K562 (cell line): ENCODE measurements at regions of chr17 and their contacts with region 1.

Region 1: DNA sequence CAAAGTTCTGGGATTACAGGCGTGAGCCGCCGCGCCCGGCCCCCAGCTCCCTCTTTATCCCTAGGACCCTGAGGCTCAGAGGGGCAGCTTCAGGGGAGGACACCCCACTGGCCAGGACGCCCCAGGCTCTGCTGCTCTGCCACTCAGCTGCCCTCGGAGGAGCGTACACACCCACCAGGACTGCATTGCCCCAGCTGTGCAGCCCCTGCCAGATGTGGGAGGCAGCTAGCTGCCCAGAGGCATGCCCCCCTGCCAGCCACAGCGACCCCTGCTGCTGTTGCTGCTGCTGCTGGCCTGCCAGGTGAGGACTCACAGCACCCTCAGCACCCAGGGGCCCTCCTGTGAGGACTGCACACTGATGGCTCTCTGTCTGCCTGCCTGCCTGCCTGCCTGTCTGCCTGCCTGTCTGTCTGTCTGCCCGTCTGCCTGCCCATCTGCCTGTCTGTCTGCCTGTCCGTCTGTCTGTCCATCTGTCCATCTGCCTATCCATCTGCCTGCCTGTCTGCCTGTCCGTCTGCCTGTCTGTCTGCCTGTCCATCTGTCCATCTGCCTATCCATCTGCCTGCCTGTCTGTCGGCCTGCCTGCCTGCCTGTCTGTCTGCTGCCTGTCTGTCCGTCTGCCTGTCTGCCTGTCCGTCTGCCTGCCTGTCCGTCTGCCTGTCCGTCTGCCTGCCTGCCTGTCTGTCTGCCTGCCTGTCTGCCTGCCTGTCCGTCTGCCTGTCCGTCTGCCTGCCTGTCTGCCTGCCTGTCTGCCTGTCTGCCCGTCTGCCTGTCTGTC is 5.0 kb downstream of the GCGR start:
- DNase-seq: no peak
- ATAC-seq: peak; percentile 36
- H3K4me3 ChIP-seq: no peak overlapping the region
- H3K27ac ChIP-seq: no peak overlapping the region
- H3K4me1 ChIP-seq: peaks cover 0 to 91% of the 10 kb centered on the region in 2 experiments; a peak in 3 of 5 replicates
- H3K27me3 ChIP-seq: peaks cover 20 to 76% of the 10 kb centered on the region in 2 experiments; a peak in 4 of 5 replicates
- CTCF ChIP-seq: peak; percentile 20 to 30 (median 23); a peak in 2 of 6 replicates
- EP300 ChIP-seq: no peak
- POLR2A ChIP-seq: no peak
- RAD21 ChIP-seq: no peak

Region 2: GRCh38 chr17:81733507-81734404 is 75.2 kb before region 1 on chr17:
- CTCF ChIA-PET with region 1: no interaction called
- POLR2A ChIA-PET with region 1: no interaction called
- in situ Hi-C with region 1: loop called (anchors 5 kb)
- intact Hi-C with region 1: no loop called
- DNase-seq: peak; percentile 81 to 92 (median 90)
- ATAC-seq: peak; percentile 96
- H3K4me3 ChIP-seq: no peak overlapping the region
- H3K27ac ChIP-seq: no peak overlapping the region
- H3K4me1 ChIP-seq: peaks cover 10 to 62% of the 10 kb centered on the region in 2 experiments; a peak in 4 of 5 replicates
- H3K27me3 ChIP-seq: no peaks in the 10 kb centered on the region
- CTCF ChIP-seq: peak; percentile 92 to 94 (median 92)
- EP300 ChIP-seq: no peak
- POLR2A ChIP-seq: no peak
- RAD21 ChIP-seq: peak; percentile 78 to 94

Region 3: GRCh38 chr17:81902023-81902652 is 93.2 kb after region 1 on chr17 and contains the start of gene NPB:
- CTCF ChIA-PET with region 1: no interaction called
- POLR2A ChIA-PET with region 1: no interaction called
- in situ Hi-C with region 1: no loop called
- intact Hi-C with region 1: no loop called
- DNase-seq: peak; percentile 65 to 73 (median 68)
- ATAC-seq: peak; percentile 86
- H3K4me3 ChIP-seq: peak within 1 kb of the TSS; percentile 32; the same call in 1 of the 2 replicates
- H3K27ac ChIP-seq: peak within 1 kb of the TSS; percentile 27; the same call in 1 of the 3 replicates
- H3K4me1 ChIP-seq: peaks cover 10 to 84% of the 10 kb centered on the region in 2 experiments
- H3K27me3 ChIP-seq: no peaks in the 10 kb centered on the region
- CTCF ChIP-seq: no peak
- EP300 ChIP-seq: no peak
- POLR2A ChIP-seq: no peak
- RAD21 ChIP-seq: no peak
- polyA plus RNA-seq, gene NPB: 0.43 to 0.61 TPM